ENCODE measurements at regions of chr17 and their contacts with region 1.

Region 1: GRCh38 chr17:40818733-40819527 is 3.5 kb downstream of the KRT10 start:
- DNase-seq: peak; percentile 95
- ATAC-seq: peak; percentile 91
- H3K4me3 ChIP-seq: peak overlapping the region; percentile 50 to 95 (median 71)
- H3K4me3 Mint-ChIP-seq: peak overlapping the region; percentile 89
- H3K27ac ChIP-seq: peak overlapping the region; percentile 68 to 86
- H3K27ac Mint-ChIP-seq: peak overlapping the region; percentile 85
- H3K4me1 ChIP-seq: peaks cover 8 to 13% of the 10 kb centered on the region in 2 donors
- H3K4me1 Mint-ChIP-seq: peaks cover 18% of the 10 kb centered on the region
- H3K27me3 ChIP-seq: peaks cover 0 to 6% (median 0%) of the 10 kb centered on the region in 4 experiments
- H3K27me3 Mint-ChIP-seq: peaks cover 16% of the 10 kb centered on the region
- CTCF ChIP-seq: no peak

Region 2: GRCh38 chr17:40726919-40727318 is 92.0 kb before region 1 on chr17:
- CTCF ChIA-PET with region 1: no interaction called
- POLR2A ChIA-PET with region 1: no interaction called
- intact Hi-C with region 1: loop called (anchors 1 kb)
- DNase-seq: peak; percentile 12
- ATAC-seq: no peak
- H3K4me3 ChIP-seq: no peak overlapping the region
- H3K4me3 Mint-ChIP-seq: peak overlapping the region; percentile 12
- H3K27ac ChIP-seq: peak overlapping the region; percentile 66 to 73
- H3K27ac Mint-ChIP-seq: peak overlapping the region; percentile 65
- H3K4me1 ChIP-seq: peaks cover 20% of the 10 kb centered on the region in 2 donors
- H3K4me1 Mint-ChIP-seq: peaks cover 22% of the 10 kb centered on the region
- H3K27me3 ChIP-seq: no peaks in the 10 kb centered on the region
- H3K27me3 Mint-ChIP-seq: peaks cover 10% of the 10 kb centered on the region
- CTCF ChIP-seq: no peak

Region 3: GRCh38 chr17:40956401-40957254 is 137.7 kb after region 1 on chr17:
- CTCF ChIA-PET with region 1: no interaction called
- POLR2A ChIA-PET with region 1: no interaction called
- intact Hi-C with region 1: no loop called
- DNase-seq: no peak
- ATAC-seq: no peak
- H3K4me3 ChIP-seq: no peak overlapping the region
- H3K4me3 Mint-ChIP-seq: no peak overlapping the region
- H3K27ac ChIP-seq: no peak overlapping the region
- H3K27ac Mint-ChIP-seq: no peak overlapping the region
- H3K4me1 ChIP-seq: no peaks in the 10 kb centered on the region
- H3K4me1 Mint-ChIP-seq: no peaks in the 10 kb centered on the region
- H3K27me3 ChIP-seq: peaks cover 0 to 9% (median 7%) of the 10 kb centered on the region in 4 experiments
- H3K27me3 Mint-ChIP-seq: peaks cover 40% of the 10 kb centered on the region
- CTCF ChIP-seq: no peak

Measured in B cell (primary cell).